ENCODE measurements at regions of chr5 and their contacts with region 1.

Region 1: DNA sequence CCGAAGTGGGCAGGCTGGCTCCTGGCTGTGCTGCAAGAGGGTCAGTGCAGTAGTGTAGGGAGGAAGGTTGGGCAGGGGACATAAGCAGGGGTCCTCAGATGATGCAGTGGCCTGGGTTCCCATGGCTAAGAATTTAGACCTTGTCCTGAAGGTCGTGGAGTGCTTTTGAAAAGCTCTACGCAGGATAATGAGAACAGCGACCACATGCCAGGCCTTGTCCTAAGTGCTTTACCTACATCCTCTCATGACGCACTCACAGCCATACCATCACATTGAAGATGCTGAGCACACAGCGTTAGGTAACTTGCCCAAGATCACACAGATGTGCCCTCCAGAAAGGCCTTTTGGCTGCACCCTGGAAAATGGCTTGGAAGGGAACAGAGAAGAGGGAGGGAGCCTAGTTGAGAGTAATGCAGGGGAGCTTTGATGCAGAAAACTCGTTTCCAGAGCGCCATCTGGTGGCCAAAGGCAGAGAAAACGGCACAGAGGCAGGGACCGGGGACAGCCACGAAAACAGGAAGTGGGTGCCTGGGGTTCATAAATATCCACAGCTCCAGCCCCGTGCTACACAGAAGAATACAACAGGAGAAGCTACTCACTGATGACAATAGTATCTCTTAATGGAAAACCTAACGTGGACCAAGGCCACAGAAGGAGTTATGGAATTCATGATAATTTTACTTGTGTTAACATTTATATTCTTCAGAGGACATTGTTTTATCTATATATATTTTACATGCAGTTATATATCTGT is 2.6 kb upstream of the PCDH12 start:
- DNase-seq: peak; percentile 91
- ATAC-seq: peak; percentile 89

Region 2: DNA sequence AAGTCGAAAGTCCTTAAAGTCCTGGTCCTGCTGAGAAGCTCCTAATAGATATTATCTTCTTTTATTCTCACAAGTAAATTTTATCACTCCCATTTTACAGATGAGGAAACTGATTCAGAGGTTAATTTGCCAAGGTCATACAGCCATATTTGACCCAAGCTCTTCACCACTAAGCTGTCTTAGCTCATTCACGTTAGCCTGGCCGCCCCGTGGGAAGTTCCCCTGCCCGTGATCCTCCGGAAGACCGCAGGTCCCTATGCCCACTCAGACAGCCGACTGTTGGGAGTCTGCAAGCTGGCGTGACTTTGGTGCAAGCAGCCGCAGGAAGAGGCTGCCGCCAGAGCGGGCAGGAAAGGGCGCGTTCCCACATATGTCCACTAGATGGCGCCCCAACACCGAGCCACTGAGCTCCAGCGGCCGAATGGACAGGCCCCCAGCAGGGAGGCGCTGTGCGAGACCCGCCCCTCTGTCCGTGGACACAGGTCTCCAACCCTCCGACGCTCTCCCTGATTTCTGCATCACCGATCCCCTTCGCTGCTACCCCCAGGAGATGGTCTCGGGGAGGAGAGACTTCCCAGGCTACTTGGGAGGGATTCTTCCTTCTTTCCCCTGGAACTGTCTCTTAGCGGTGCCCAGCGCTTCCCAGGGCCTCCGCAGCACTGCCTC is 268.6 kb before region 1 on chr5:
- intact Hi-C with region 1: loop called (anchors 1 kb)
- DNase-seq: peak; percentile 93
- ATAC-seq: peak; percentile 88

Region 3: GRCh38 chr5:141923448-141924352 is 36.9 kb before region 1 on chr5 and contains the start of gene DELE1:
- intact Hi-C with region 1: loop called (anchors 5 kb)
- DNase-seq: peak; percentile 98
- ATAC-seq: peak; percentile 98
- total RNA-seq, gene DELE1: 94.4 TPM